Activated T-helper 2 cell treated with anti-CD3 and anti-CD28 coated beads, Interferon-gamma antibody, Interleukin-2, Interleukin-4, amounts not matched to agents 10 μg/mL and 5 μg/mL and 100 μg/mL, durations not matched to agents 14 hours and 24 hours and 36 hours (primary cell): ENCODE measurements at regions of chr11 and their contacts with region 1.

Region 1: DNA sequence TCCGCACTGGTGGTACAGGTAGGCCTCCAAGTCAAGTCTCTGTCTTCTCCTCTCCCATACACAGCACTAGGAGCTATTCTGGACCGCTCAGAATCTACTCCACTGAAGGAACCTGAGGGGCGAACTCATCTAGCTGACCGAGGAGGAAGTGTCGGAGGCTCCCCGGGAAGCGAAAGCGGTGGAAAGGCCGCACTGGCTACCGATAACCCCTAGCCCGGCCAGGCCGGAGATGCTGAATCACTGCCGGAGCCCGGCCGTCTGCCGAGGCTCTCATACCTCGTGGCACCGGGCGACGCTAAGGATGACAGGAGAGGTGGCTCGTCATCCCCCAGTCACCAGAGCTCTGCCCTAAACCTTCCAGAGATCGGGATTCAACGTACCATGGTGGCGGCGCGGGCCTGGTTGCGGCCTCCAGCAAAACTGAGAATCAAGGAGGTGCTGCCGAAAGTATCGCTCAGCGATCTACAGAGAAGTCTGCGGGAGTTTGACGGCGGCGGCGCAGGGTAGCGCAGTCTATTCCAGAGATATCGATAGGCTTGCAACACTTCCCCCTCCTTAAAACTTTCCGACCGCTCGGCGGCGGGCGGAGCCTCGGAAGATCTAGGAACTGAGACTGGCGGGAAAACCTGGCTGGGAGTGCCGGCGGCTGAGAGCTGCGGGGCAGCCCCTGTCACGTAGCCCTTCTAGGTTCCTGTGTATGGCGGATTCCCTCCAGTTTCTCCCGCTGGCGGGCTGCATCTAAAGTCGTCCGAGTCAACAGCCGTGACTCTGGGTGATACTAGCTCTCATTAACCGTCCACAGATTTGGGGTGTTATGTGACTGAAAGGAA is at the start of gene PSMA1:
- DNase-seq: peak; percentile 92
- H3K4me3 Mint-ChIP-seq: peak within 1 kb of the TSS; percentile 90
- H3K27ac Mint-ChIP-seq: peak within 1 kb of the TSS; percentile 89
- H3K4me1 Mint-ChIP-seq: peaks cover 27% of the 10 kb centered on the region
- H3K27me3 Mint-ChIP-seq: no peaks in the 10 kb centered on the region
- total RNA-seq, gene PSMA1: 319 and 329 TPM in 2 replicates

Region 2: DNA sequence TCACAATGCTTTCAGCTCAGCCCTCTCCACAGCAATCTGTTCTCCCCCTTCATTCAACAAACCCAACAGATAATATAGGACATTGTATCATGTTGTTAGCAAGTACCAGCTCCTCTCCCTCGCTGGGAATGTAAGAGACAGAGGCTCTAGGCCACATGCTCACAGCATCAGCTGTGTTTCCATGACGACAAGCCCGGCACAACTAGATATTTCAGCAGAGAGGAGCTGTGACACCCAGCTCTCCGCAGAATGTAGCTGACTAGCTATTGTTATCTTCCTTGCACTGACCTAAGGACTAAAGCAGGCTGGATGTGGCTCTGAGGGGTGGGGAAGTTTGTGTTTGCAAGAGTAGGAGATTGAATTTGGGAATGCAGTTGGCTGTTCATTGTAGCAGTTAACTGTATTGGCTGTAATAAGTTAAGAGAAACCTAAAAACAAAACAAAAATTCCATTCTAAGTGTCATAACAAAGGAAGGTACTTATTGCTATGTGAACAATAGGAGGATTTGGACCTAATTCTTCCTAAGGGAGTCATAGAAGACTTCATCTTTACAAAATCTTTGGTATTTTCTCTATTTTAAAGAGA is 133.1 kb before region 1 on chr11:
- intact Hi-C with region 1: no loop called
- DNase-seq: no peak
- H3K4me3 Mint-ChIP-seq: no peak overlapping the region
- H3K27ac Mint-ChIP-seq: no peak overlapping the region
- H3K4me1 Mint-ChIP-seq: no peaks in the 10 kb centered on the region
- H3K27me3 Mint-ChIP-seq: peaks cover 32% of the 10 kb centered on the region

Region 3: GRCh38 chr11:14499554-14500180 is 20.5 kb before region 1 on chr11 and contains the start of gene COPB1:
- intact Hi-C with region 1: loop called (anchors 1 kb)
- DNase-seq: peak; percentile 91
- H3K4me3 Mint-ChIP-seq: peak within 1 kb of the TSS; percentile 97
- H3K27ac Mint-ChIP-seq: peak within 1 kb of the TSS; percentile 96
- H3K4me1 Mint-ChIP-seq: peaks cover 40% of the 10 kb centered on the region
- H3K27me3 Mint-ChIP-seq: no peaks in the 10 kb centered on the region
- total RNA-seq, gene COPB1: 103 and 105 TPM in 2 replicates

Region 4: GRCh38 chr11:14537134-14537599 is 17.0 kb after region 1 on chr11:
- intact Hi-C with region 1: loop called (anchors 1 kb)
- DNase-seq: no peak
- H3K4me3 Mint-ChIP-seq: peak overlapping the region; percentile 63
- H3K27ac Mint-ChIP-seq: peak overlapping the region; percentile 74
- H3K4me1 Mint-ChIP-seq: peaks cover 28% of the 10 kb centered on the region
- H3K27me3 Mint-ChIP-seq: no peaks in the 10 kb centered on the region

Region 5: DNA sequence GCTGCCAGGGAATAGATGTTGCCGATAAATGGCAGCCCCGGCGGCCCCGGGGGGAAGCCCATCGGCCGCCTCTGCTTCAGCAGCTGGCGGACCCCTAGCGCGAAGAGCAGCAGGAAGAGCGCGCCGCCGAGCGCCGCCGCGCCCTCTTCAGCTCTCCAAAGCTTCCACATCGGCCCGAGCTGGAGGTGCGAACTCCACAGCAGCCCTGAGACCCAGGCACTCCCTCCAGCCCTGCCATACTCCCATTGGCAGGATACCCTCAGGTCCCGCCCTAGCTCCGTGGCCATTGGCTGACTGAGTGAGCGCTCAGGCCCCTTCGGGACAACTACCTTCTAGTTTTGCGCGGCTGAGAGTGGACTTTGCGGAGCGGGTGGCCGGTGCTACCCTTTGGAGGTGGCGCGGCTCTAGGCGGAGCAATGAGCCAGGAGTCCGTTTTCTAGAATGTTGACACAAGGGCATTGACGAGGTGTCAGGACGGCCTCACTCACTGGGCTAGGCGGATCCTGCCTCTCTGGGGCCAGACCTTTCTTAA is 372.0 kb after region 1 on chr11 and contains the start of gene CYP2R1:
- intact Hi-C with region 1: loop called (anchors 1 kb)
- DNase-seq: peak; percentile 89
- H3K4me3 Mint-ChIP-seq: peak within 1 kb of the TSS; percentile 88
- H3K27ac Mint-ChIP-seq: peak within 1 kb of the TSS; percentile 98
- H3K4me1 Mint-ChIP-seq: peaks cover 53% of the 10 kb centered on the region
- H3K27me3 Mint-ChIP-seq: no peaks in the 10 kb centered on the region
- total RNA-seq, gene CYP2R1: 18.2 and 20.8 TPM in 2 replicates